ENCODE measurements at regions of chr10 and their contacts with region 1.

Region 1: GRCh38 chr10:96743988-96744585 is 23.8 kb upstream of the PIK3AP1 start:
- DNase-seq: peak in 1 of 4 experiments; percentile 27
- ATAC-seq: peak; percentile 75
- H3K4me3 ChIP-seq: no peak overlapping the region
- H3K27ac ChIP-seq: no peak overlapping the region
- H3K4me1 ChIP-seq: peaks cover 3 to 5% of the 10 kb centered on the region in 2 experiments; a peak in 2 of 5 replicates
- H3K27me3 ChIP-seq: no peaks in the 10 kb centered on the region
- CTCF ChIP-seq: peak; percentile 33 to 56 (median 48); a peak in 5 of 6 replicates
- EP300 ChIP-seq: no peak
- POLR2A ChIP-seq: no peak
- RAD21 ChIP-seq: peak; percentile 58 to 73

Region 2: DNA sequence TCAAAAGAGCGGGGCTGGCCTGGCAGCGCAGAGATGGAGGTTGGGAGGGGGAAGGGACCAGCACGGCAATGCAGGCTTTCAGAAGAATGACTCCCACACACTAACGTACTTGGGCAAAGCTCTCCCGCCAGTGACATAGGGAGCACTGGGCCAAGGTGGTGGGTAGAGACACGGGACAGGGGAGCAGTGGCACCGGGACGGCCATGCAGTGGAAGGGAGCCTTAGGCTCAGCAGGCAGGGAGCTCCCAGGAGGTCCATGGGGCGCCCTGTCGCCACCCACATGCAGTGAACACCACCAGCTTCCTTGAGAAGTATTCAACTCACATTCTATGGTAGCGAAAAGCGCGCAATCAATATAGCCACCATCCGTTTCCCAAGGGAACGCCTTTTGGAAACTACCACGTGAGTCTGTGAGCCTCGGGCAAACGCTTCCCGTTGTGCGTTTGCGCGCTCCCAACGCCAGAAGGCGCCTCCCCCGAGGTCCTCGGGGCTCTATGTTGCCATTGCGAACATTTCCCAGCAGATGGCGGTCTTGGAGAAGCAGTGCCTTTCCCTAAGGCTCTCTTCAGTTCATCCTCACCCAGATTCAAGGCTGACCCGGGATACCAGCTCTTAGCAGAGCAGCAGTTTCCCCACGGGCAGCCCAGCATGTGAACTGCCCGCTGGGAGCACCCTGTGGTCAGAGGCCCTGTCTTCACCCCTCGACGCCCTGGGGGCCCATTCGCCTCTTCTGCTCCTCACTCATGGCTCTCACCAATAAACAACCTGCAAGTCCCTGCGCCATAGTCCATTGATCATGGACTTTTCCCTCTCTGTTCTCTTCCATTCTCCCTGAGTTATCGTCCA is 368.9 kb before region 1 on chr10:
- CTCF ChIA-PET with region 1: no interaction called
- POLR2A ChIA-PET with region 1: no interaction called
- in situ Hi-C with region 1: no loop called
- intact Hi-C with region 1: loop called (anchors 10 kb)
- DNase-seq: peak; percentile 84 to 86 (median 85)
- ATAC-seq: peak; percentile 95
- H3K4me3 ChIP-seq: peak overlapping the region; percentile 16
- H3K27ac ChIP-seq: no peak overlapping the region
- H3K4me1 ChIP-seq: peaks cover 0 to 9% of the 10 kb centered on the region in 2 experiments; a peak in 1 of 5 replicates
- H3K27me3 ChIP-seq: peaks cover 0 to 23% of the 10 kb centered on the region in 2 experiments; a peak in 2 of 5 replicates
- CTCF ChIP-seq: peak; percentile 98 to 99 (median 99)
- EP300 ChIP-seq: no peak
- POLR2A ChIP-seq: no peak
- RAD21 ChIP-seq: peak; percentile 58 to 79

Region 3: GRCh38 chr10:96664563-96664962 is 79.5 kb before region 1 on chr10:
- CTCF ChIA-PET with region 1: no interaction called
- POLR2A ChIA-PET with region 1: no interaction called
- in situ Hi-C with region 1: no loop called
- intact Hi-C with region 1: loop called (anchors 5 kb)
- DNase-seq: no peak
- ATAC-seq: 0 out of 3 replicates have a peak, but pooled peaks have one; percentile 29
- H3K4me3 ChIP-seq: no peak overlapping the region
- H3K27ac ChIP-seq: no peak overlapping the region
- H3K4me1 ChIP-seq: no peaks in the 10 kb centered on the region; a peak in 2 of 5 replicates
- H3K27me3 ChIP-seq: no peaks in the 10 kb centered on the region
- CTCF ChIP-seq: no peak
- EP300 ChIP-seq: no peak
- POLR2A ChIP-seq: no peak
- RAD21 ChIP-seq: no peak

Measured in K562 (cell line).